ENCODE measurements at regions of chr11 and their contacts with region 1.

Region 1: DNA sequence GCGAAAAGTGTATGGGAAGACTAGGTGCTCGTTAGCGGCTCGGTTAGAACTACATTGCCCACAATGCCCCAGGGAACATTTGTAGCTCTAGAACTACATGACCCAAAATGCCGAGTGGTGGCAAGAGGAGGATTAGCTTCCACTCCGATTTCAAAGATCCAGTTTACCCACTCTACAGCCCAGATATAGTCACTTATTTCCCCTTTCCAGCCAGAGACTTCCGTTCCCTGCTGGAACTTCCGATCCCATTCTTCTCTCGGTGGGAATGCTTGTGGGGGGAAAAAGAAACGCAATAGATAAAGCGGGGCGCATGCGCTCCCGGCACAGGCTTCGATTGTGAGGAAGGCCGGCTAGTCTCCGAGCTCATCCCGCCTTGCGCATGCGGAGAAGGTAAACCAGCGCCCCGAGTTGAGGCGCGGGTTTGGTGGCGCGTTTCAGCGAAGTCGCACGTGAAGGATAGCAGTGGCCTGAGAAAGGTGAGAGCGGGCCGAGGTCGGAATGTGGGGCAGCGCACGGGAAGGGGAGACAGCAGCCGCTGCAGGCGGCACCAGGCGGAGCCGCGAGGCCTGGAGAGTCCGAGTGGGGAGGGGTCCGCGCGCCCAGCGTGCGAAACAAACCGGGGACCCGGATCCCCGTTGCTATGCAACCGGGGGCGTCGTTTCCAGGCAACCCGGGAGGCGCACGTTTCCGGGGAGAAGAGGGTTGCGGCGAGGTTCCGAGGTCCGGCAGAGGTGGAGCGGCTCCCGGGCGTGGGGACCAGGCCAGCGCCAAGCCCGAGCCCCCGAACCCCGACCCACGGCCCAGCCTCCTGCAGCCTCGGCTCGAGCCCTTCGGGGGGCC is at the start of gene TMEM109:
- DNase-seq: peak; percentile 92
- ATAC-seq: peak; percentile 77
- H3K4me3 Mint-ChIP-seq: peak within 1 kb of the TSS; percentile 93
- H3K27ac Mint-ChIP-seq: peak within 1 kb of the TSS; percentile 96
- H3K4me1 Mint-ChIP-seq: peaks cover 49% of the 10 kb centered on the region
- H3K27me3 Mint-ChIP-seq: peaks cover 2% of the 10 kb centered on the region
- total RNA-seq, gene TMEM109: 136 to 139 TPM

Region 2: GRCh38 chr11:60899046-60899936 is 14.7 kb before region 1 on chr11:
- CTCF ChIA-PET with region 1: interaction called, 28 read pairs
- POLR2A ChIA-PET with region 1: interaction called, 23 read pairs
- DNase-seq: peak; percentile 50
- ATAC-seq: peak; percentile 73
- H3K4me3 Mint-ChIP-seq: no peak overlapping the region
- H3K27ac Mint-ChIP-seq: no peak overlapping the region
- H3K4me1 Mint-ChIP-seq: peaks cover 19% of the 10 kb centered on the region
- H3K27me3 Mint-ChIP-seq: no peaks in the 10 kb centered on the region

Region 3: DNA sequence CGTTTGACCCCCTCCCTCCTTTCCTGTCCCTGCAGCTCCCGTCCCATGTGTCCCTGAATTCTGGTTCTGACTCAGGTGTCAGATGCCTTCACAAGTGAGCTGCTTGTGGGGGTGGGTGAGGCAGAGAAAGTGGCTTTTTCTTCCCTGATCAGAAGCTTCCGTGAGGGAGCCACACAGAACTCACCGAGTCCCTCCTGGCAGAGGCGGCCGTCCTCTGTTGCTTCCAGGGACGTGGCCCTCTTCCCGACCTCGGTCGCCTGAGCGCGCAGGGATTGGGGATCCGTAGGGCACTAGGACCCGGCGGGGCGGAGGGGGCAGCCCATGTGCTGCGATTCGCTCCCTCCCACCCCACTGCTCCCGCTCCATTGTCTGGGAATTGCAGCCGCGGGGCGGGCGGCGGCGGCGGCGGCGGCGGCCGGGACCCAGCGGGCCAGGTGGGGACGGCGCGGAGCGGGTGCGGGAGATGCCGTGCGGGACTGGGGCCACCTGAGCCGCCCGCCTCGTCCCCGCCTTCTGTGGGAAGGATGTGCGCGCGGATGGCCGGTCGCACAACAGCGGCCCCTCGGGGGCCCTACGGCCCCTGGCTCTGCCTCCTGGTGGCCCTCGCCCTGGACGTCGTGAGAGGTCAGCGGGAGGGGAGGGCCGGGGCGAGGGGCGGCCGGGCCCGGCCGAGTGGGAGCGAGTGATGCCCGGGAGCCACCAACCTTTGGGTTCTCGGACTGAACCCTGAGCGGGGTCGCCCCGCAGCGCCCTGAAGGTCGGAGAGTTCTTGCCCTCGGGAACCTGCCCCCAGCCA is 10.3 kb after region 1 on chr11 and contains the start of gene TMEM132A:
- CTCF ChIA-PET with region 1: interaction called, 11 read pairs
- POLR2A ChIA-PET with region 1: interaction called, 6 read pairs
- DNase-seq: no peak
- ATAC-seq: peak; percentile 42
- H3K4me3 Mint-ChIP-seq: peak within 1 kb of the TSS; percentile 53
- H3K27ac Mint-ChIP-seq: no peak within 1 kb of the TSS
- H3K4me1 Mint-ChIP-seq: peaks cover 13% of the 10 kb centered on the region
- H3K27me3 Mint-ChIP-seq: peaks cover 25% of the 10 kb centered on the region
- total RNA-seq, gene TMEM132A: 0.37 to 0.47 TPM

Region 4: DNA sequence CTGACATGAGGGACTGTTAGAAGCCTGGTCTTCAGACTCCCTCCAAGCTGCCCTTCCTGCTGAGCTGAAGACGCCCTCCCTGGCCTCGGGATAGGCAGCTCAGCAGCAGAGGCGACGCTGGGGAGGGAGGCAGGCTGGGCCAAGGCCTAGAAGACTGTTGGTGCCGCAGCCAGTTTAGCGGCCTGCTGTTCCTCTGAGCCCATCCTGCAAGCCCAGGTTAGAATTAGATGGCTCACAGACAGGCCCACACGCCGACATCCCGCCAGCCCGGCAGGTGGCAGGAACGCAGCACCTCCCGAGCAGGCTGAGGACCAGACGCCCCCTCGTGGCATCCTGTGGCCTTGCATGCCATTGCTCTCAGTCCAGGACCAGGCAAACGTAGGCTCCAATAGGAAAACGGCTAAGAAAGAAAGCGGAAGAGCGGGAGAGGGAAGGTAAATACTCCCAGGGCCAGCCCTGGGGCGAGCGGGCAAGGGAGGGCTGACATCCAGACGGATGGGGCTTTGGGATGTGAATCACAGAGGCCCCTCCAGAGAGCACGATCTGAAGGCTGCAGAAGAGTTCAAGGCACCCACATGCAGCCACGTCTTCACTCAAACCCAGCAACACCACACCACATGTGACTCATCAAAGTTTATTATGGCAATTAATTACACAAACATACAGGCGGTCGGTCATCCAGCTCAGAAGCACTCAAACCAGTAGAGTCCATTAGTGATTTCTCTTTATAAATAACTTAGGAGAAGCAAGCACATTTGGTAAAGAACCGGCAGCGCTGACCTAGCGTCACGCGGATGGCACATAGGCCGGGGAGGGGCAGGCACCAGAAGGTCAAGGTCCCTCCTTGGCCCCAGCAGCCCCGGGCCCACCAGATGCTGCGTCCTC is 215.9 kb after region 1 on chr11:
- CTCF ChIA-PET with region 1: interaction called, 13 read pairs
- POLR2A ChIA-PET with region 1: interaction called, 4 read pairs
- DNase-seq: peak; percentile 94
- ATAC-seq: peak; percentile 94
- H3K4me3 Mint-ChIP-seq: peak overlapping the region; percentile 32
- H3K27ac Mint-ChIP-seq: peak overlapping the region; percentile 47
- H3K4me1 Mint-ChIP-seq: peaks cover 23% of the 10 kb centered on the region
- H3K27me3 Mint-ChIP-seq: no peaks in the 10 kb centered on the region

Region 5: GRCh38 chr11:61187505-61188130 is 273.6 kb after region 1 on chr11:
- CTCF ChIA-PET with region 1: interaction called, 13 read pairs
- POLR2A ChIA-PET with region 1: interaction called, 3 read pairs
- DNase-seq: peak; percentile 87
- ATAC-seq: peak; percentile 87
- H3K4me3 Mint-ChIP-seq: no peak overlapping the region
- H3K27ac Mint-ChIP-seq: no peak overlapping the region
- H3K4me1 Mint-ChIP-seq: peaks cover 3% of the 10 kb centered on the region
- H3K27me3 Mint-ChIP-seq: peaks cover 4% of the 10 kb centered on the region

Measured in activated CD8-positive, alpha-beta T cell treated with anti-CD3 and anti-CD28 coated beads, Interleukin-2, amount 10 ng/mL, durations not matched to agents 7 days and 5 days (primary cell).